HCT116 (cell line): ENCODE measurements at regions of chr10 and their contacts with region 1.

Region 1: GRCh38 chr10:125868372-125868975 is 12.6 kb downstream of the DHX32 start:
- DNase-seq: peak; percentile 59
- ATAC-seq: peak; percentile 87
- H3K4me3 ChIP-seq: no peak overlapping the region
- H3K27ac ChIP-seq: no peak overlapping the region
- H3K4me1 ChIP-seq: no peaks in the 10 kb centered on the region
- H3K27me3 ChIP-seq: no peaks in the 10 kb centered on the region
- CTCF ChIP-seq: peak; percentile 85 to 100 (median 94); a peak in 5 of 6 replicates
- POLR2A ChIP-seq: no peak
- RAD21 ChIP-seq: peak; percentile 97

Region 2: GRCh38 chr10:125878957-125879835 is 10.7 kb after region 1 on chr10:
- CTCF ChIA-PET with region 1: interaction called, 18 read pairs
- POLR2A ChIA-PET with region 1: no interaction called
- RAD21 ChIA-PET with region 1: no interaction called
- intact Hi-C with region 1: no loop called
- DNase-seq: peak; percentile 93
- ATAC-seq: peak; percentile 93
- H3K4me3 ChIP-seq: peak overlapping the region in 1 of 2 experiments; percentile 2; a peak in 2 of 4 replicates
- H3K27ac ChIP-seq: peak overlapping the region; percentile 64
- H3K4me1 ChIP-seq: peaks cover 28 to 31% of the 10 kb centered on the region in 2 experiments
- H3K27me3 ChIP-seq: no peaks in the 10 kb centered on the region
- CTCF ChIP-seq: no peak
- POLR2A ChIP-seq: no peak
- RAD21 ChIP-seq: peak; percentile 33; the same call in 1 of the 2 replicates

Region 3: DNA sequence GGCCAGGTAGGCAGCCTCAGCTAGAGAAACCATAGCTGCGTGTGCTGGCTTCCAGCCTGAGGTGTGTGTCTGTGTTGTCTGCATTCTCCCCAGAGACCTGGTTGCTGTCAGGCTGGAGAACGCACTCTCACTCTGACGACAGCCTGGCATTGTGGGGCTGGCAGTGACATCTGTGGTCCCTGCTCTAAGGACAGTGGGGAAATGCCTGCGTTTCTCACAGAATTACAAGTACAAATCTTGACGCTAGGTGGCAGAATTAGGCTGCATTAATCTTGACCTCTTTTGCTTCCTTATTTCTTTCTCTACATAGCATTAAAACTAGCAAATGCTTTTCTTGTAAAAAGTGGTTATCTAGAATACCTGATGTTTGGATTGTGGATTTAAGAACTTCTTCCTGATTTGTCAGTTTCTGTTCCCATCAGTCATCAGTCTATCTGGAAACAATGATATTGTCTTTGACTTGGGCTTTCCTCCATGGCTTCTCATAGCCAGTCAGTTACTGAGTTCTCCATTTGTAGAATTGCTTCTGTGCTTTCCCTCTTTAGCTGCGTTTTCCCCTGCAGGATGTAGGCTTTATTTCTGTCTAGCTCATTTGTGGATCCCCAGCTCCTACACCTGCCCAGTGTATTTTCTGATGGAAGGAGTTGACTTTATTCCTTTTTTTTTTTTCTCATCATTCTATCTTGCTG is 113.9 kb after region 1 on chr10:
- CTCF ChIA-PET with region 1: interaction called, 7 read pairs
- POLR2A ChIA-PET with region 1: no interaction called
- RAD21 ChIA-PET with region 1: no interaction called
- intact Hi-C with region 1: loop called (anchors 2 kb)
- DNase-seq: peak; percentile 64
- ATAC-seq: peak; percentile 95
- H3K4me3 ChIP-seq: no peak overlapping the region
- H3K27ac ChIP-seq: no peak overlapping the region
- H3K4me1 ChIP-seq: no peaks in the 10 kb centered on the region
- H3K27me3 ChIP-seq: peaks cover 15% of the 10 kb centered on the region; the same call in 1 of the 2 replicates
- CTCF ChIP-seq: peak; percentile 59 to 78 (median 75)
- POLR2A ChIP-seq: no peak
- RAD21 ChIP-seq: peak; percentile 92

Region 4: GRCh38 chr10:126087796-126088505 is 219.5 kb after region 1 on chr10:
- CTCF ChIA-PET with region 1: no interaction called
- POLR2A ChIA-PET with region 1: no interaction called
- RAD21 ChIA-PET with region 1: no interaction called
- intact Hi-C with region 1: no loop called
- DNase-seq: no peak
- ATAC-seq: peak; percentile 37
- H3K4me3 ChIP-seq: no peak overlapping the region
- H3K27ac ChIP-seq: no peak overlapping the region
- H3K4me1 ChIP-seq: no peaks in the 10 kb centered on the region; a peak in 1 of 4 replicates
- H3K27me3 ChIP-seq: peaks cover 10% of the 10 kb centered on the region; the same call in 1 of the 2 replicates
- CTCF ChIP-seq: no peak
- POLR2A ChIP-seq: no peak
- RAD21 ChIP-seq: no peak

Region 5: DNA sequence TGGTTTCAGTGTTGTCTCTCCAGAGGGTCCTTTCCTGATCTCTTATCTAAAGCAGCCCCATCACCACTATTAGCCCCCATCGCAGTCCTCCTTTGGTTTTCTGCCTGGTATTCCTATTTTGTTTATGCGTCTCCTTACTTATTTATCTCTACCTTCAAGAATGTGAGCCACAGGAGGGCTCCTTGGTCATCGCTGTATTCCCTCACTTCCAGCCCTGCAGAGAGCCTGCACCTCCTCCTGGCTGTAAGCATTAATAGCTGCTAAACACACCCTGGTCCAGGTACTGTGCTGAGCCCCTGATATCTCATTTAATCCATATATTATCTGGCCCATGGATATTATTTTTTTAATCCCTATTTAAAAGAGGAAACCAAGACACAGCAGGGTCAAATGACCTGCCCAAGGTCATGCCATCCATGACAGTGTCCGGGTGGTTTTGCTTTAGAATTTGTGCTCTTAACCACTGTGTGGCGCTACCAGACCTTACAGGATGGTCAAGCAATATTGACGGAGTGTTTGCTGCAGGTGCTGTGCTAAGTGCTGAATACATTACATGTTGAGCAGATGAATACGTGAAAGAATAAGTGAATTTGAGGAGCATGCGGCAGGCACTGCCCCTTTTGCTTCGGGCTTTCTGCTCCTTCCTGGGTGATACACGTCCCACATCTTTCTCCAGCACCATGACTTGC is 292.6 kb after region 1 on chr10:
- CTCF ChIA-PET with region 1: interaction called, 3 read pairs
- POLR2A ChIA-PET with region 1: no interaction called
- RAD21 ChIA-PET with region 1: no interaction called
- intact Hi-C with region 1: loop called (anchors 10 kb)
- DNase-seq: peak; percentile 50
- ATAC-seq: peak; percentile 82
- H3K4me3 ChIP-seq: no peak overlapping the region
- H3K27ac ChIP-seq: no peak overlapping the region
- H3K4me1 ChIP-seq: no peaks in the 10 kb centered on the region
- H3K27me3 ChIP-seq: peaks cover 58% of the 10 kb centered on the region
- CTCF ChIP-seq: peak; percentile 74 to 93 (median 88)
- POLR2A ChIP-seq: no peak
- RAD21 ChIP-seq: peak; percentile 91

Region 6: GRCh38 chr10:126598003-126598402 is 729.5 kb after region 1 on chr10:
- CTCF ChIA-PET with region 1: no interaction called
- POLR2A ChIA-PET with region 1: no interaction called
- RAD21 ChIA-PET with region 1: no interaction called
- intact Hi-C with region 1: loop called (anchors 2 kb)
- DNase-seq: peak; percentile 38
- ATAC-seq: peak; percentile 98
- H3K4me3 ChIP-seq: no peak overlapping the region
- H3K27ac ChIP-seq: no peak overlapping the region
- H3K4me1 ChIP-seq: no peaks in the 10 kb centered on the region
- H3K27me3 ChIP-seq: peaks cover 53% of the 10 kb centered on the region
- CTCF ChIP-seq: peak; percentile 55 to 93 (median 86); a peak in 5 of 6 replicates
- POLR2A ChIP-seq: no peak
- RAD21 ChIP-seq: peak; percentile 66